AG04449 (cell line): ENCODE measurements at regions of chr22 and their contacts with region 1.

Region 1: GRCh38 chr22:32660292-32660691 is 141.2 kb upstream of the TIMP3 start:
- DNase-seq: no peak
- H3K4me3 ChIP-seq: no peak overlapping the region
- CTCF ChIP-seq: peak; percentile 80

Region 2: DNA sequence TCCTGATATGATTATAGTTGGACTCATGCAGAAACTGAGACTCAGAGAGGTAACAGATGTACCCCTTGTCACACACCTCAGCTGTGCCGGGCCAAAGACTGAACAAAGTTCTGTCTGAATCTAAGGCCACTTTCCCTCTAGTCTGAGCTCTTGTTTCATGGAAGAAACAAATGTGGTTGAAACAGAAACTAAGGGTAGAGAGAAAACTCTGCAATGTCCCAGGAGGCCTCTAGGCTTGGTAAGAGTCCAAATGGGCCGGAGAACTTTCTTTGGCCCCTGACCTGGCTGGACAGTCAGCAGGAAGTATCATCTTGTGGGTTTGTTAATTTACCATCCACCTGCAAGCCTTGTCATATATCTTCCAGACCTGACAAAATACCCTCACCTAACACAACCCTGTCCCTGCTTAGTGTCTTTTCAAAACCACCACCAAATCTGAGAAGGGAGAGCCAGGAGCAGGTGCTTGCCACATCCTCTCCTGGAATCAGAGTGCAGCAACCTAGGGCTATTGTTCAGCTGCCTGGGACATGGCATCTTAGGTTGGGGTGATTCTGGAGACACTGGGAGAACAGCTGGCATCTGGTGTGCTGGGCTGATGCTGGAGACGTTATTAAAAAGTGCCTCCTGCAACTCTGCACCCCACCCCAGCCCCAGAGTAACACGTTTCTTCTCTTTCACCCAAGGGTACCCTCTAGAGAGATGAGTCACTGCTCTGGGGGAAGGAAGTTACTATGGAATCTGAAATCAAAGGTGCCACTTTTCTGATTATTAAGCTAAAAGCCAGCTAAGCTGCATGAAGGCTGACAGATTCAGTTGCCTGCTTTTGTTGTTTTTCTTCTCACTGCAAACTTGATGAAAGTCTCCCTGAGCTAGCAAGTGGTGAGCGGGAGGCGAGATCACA is 14.9 kb after region 1 on chr22:
- CTCF ChIA-PET with region 1: interaction called, 21 read pairs
- POLR2A ChIA-PET with region 1: no interaction called
- DNase-seq: no peak
- H3K4me3 ChIP-seq: no peak overlapping the region
- CTCF ChIP-seq: no peak

Region 3: GRCh38 chr22:32788909-32789624 is 128.8 kb after region 1 on chr22:
- CTCF ChIA-PET with region 1: interaction called, 578 read pairs
- POLR2A ChIA-PET with region 1: no interaction called
- DNase-seq: no peak
- H3K4me3 ChIP-seq: no peak overlapping the region
- CTCF ChIP-seq: no peak

Region 4: DNA sequence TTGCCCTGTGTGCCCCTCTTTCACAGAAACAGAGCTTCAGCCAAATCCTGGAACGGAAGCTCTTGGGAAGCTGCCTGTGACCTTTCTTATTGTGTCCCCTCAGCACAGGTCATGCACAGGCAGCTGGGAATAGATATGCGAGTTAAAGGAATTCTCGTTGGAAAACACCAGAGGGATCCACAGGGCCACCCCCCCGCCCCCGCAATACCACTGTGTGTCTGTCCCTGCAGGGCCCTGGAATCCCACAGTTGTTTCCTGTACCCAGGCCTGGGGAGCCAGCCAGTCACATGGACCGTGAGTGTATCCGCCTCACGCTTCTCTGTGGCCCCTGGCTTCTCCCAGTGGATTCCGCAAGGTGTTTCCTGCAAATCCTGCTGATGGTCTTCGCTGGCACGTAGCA is 170.2 kb after region 1 on chr22:
- CTCF ChIA-PET with region 1: interaction called, 42 read pairs
- POLR2A ChIA-PET with region 1: no interaction called
- DNase-seq: no peak
- H3K4me3 ChIP-seq: no peak overlapping the region
- CTCF ChIP-seq: no peak

Region 5: DNA sequence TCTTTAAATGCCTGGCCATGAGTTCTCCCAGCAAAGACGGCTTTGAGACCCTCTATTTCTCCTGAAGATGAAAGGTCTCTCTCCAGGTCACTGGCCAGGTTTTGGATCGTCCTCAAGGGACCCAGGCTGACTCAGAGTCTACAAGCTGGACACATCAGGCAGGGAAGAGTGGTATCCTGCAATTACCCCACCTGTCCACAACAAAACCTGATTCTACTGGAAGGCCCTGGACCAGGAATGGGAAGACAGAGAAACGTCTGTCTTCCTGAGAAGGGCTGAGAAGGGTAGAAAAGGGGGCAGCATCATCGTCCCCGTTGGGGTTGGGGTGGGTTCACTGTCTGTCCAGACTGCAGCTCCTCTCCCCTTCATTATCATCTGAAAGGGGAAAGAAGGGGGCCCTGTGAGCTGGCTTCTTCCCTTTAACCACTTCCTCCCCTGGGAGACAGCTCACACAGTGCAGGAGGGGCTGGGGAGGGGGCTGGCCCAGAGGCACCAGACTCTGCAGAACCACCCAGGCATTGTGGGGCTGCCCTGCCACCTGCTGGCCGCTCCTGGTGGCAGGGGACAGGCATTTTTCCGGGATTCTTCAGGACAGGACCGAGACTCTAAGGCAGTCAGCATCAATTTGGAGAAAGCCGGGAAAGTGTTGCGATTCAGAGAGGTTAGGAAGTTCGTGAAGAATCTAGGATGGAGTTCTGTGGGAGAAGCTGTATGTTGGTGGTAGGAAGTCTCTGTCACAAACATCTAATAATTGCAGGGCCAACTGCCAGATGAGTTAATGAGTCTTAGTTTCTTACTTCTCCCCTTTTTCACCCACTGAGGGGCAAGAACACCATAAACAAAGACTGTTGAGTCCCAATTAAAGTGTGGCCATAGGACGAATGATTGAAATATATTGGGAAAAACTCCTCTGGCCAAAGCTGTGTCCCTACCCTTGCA is 340.3 kb after region 1 on chr22:
- CTCF ChIA-PET with region 1: interaction called, 21 read pairs
- POLR2A ChIA-PET with region 1: no interaction called
- DNase-seq: no peak
- H3K4me3 ChIP-seq: no peak overlapping the region
- CTCF ChIP-seq: peak; percentile 96